ENCODE measurements at regions of chr14 and their contacts with region 1.

Region 1: GRCh38 chr14:33406766-33407165 is 468.1 kb downstream of the NPAS3 start:
- DNase-seq: no peak
- H3K4me3 ChIP-seq: no peak overlapping the region
- H3K27ac ChIP-seq: no peak overlapping the region
- H3K4me1 ChIP-seq: no peaks in the 10 kb centered on the region
- H3K27me3 ChIP-seq: no peaks in the 10 kb centered on the region
- CTCF ChIP-seq: no peak
- EP300 ChIP-seq: no peak
- POLR2A ChIP-seq: no peak

Region 2: DNA sequence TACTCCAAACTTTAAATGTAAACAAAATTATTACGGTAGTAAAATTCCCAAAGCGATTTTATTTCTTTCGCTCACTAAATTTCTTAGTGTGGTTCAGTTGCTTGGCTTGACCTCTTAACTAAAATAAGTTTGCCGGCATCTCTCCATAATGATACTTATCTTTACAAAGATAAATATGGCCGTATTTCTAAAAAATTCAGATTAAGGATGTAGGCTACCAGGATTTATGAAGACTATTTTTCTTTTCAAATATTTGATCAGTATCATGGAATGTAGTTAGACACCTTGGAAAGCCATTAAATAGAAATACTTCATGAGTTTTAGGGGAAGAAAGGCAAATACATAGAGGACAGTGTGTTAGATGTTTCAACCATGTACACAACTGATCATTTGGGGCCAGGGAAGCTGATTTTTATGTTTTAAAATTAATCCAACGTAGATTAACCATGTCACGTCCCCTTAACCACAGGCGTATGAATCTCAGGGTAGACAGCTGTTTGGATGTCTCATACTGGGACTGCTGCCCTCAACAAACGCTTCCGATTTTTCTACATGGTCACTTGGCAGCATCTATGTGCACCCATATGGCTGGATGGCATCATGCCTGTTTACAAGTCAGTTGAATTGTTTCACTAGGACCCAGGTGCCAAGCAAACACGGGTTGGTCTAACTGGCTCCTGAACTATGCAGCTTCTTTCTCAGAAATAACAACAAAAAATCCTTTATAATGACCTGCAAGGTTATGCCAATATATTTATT is 74.4 kb before region 1 on chr14:
- in situ Hi-C with region 1: no loop called
- intact Hi-C with region 1: no loop called
- DNase-seq: no peak
- H3K4me3 ChIP-seq: no peak overlapping the region
- H3K27ac ChIP-seq: no peak overlapping the region
- H3K4me1 ChIP-seq: no peaks in the 10 kb centered on the region
- H3K27me3 ChIP-seq: no peaks in the 10 kb centered on the region
- CTCF ChIP-seq: no peak
- EP300 ChIP-seq: no peak
- POLR2A ChIP-seq: no peak

Region 3: GRCh38 chr14:33432407-33433023 is 25.7 kb after region 1 on chr14:
- in situ Hi-C with region 1: no loop called
- intact Hi-C with region 1: no loop called
- DNase-seq: peak; percentile 32
- H3K4me3 ChIP-seq: no peak overlapping the region
- H3K27ac ChIP-seq: no peak overlapping the region
- H3K4me1 ChIP-seq: no peaks in the 10 kb centered on the region
- H3K27me3 ChIP-seq: no peaks in the 10 kb centered on the region
- CTCF ChIP-seq: peak; percentile 36 to 57 (median 46)
- EP300 ChIP-seq: no peak
- POLR2A ChIP-seq: no peak

Region 4: DNA sequence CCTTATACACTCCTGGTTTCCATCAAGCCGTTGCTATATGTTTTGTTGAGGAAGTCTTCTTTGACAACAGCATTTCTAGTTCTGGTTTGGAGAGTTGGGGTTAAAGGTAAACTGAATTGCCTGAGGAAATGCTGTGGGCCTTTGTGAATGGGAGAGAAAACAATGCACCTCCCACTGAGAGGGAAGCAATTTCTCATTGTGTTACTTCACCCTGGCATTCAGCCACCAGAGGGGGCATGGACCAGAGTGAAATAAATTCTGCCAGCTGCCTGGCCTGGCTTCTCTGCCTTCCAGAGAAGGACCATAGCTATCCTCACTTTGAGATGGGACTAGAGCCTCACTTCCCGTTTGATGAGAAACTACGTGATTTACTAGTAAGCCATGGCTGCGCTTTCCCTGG is 68.9 kb after region 1 on chr14:
- in situ Hi-C with region 1: no loop called
- intact Hi-C with region 1: loop called (anchors 2 kb)
- DNase-seq: peak; percentile 73
- H3K4me3 ChIP-seq: no peak overlapping the region
- H3K27ac ChIP-seq: no peak overlapping the region
- H3K4me1 ChIP-seq: peaks cover 0 to 6% (median 0%) of the 10 kb centered on the region in 4 donors
- H3K27me3 ChIP-seq: no peaks in the 10 kb centered on the region
- CTCF ChIP-seq: peak in 4 of 5 experiments; percentile 38 to 61 (median 48)
- EP300 ChIP-seq: no peak
- POLR2A ChIP-seq: no peak

Measured in transverse colon (tissue), 4 donors.